PC-9 (cell line): ENCODE measurements at regions of chr21 and their contacts with region 1.

Region 1: DNA sequence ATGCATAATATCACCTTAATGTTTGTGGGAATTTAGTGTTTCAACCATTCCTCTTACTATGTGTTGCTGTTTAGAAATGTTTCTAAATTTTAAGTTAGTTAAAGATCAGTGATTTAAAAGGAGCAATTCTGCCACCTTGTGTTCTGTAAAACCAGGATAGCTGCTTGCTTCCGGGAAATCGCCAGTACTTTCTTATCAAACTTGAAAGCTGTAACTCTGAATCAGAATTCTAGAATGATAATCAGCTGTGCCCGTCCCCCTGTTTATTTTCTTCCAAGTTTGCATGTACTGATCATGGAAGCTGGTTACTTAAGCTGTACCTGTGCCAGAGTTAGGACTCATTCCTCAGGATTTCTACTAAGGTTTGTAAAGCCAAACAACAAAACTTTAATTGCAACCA is 656.4 kb downstream of the LTN1 start:
- DNase-seq: peak in 1 of 2 experiments; percentile 4
- H3K4me3 ChIP-seq: no peak overlapping the region
- H3K27ac ChIP-seq: no peak overlapping the region
- H3K4me1 ChIP-seq: no peaks in the 10 kb centered on the region
- H3K27me3 ChIP-seq: no peaks in the 10 kb centered on the region
- CTCF ChIP-seq: peak; percentile 43; the same call in 1 of the 2 replicates

Region 2: DNA sequence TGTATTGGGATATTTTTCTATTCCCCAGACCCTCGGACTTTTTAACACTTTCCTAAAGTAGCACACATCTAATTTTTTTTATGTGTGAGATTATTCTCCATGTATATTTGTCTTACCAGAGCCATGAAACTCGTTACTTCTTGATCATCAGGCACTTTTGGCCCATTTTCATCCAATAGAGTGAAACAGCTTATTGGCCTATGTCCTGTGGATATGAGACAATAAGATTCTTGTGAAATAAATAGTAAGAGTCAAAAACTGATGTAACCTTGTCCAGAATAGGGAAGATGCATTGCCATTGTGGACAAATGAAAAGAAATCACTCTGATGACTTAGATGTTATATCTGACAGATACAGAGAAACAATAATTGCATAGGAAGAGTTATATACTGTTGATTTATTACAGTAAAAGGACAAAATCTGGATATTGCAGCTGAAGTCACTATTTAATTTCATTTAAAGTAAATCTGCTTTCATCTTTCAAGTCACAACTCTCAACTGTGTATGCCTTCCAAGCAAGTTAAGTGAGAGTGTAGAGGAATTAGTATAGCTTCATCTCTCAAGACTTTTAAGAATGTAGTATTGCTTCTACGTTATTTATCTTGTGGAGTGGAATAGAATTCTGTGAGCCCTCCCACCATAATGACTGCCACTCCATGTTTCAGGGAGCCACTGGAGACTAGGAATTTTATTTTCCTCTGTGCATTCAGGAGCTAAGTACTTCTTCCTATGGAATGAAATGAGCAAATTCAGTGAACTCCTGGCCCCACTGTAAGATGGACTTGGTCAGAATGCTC is 1578.0 kb before region 1 on chr21:
- CTCF ChIA-PET with region 1: no interaction called
- POLR2A ChIA-PET with region 1: interaction called, 11 read pairs
- intact Hi-C with region 1: no loop called
- DNase-seq: no peak
- H3K4me3 ChIP-seq: no peak overlapping the region
- H3K27ac ChIP-seq: no peak overlapping the region
- H3K4me1 ChIP-seq: no peaks in the 10 kb centered on the region
- H3K27me3 ChIP-seq: no peaks in the 10 kb centered on the region
- CTCF ChIP-seq: no peak

Region 3: GRCh38 chr21:27700974-27701614 is 635.2 kb before region 1 on chr21:
- CTCF ChIA-PET with region 1: no interaction called
- POLR2A ChIA-PET with region 1: no interaction called
- intact Hi-C with region 1: loop called (anchors 1 kb)
- DNase-seq: peak; percentile 50 to 52
- H3K4me3 ChIP-seq: no peak overlapping the region
- H3K27ac ChIP-seq: no peak overlapping the region
- H3K4me1 ChIP-seq: no peaks in the 10 kb centered on the region
- H3K27me3 ChIP-seq: no peaks in the 10 kb centered on the region
- CTCF ChIP-seq: peak; percentile 80

Region 4: GRCh38 chr21:27759091-27759659 is 577.1 kb before region 1 on chr21:
- CTCF ChIA-PET with region 1: no interaction called
- POLR2A ChIA-PET with region 1: no interaction called
- intact Hi-C with region 1: loop called (anchors 1 kb)
- DNase-seq: peak in 1 of 2 experiments; percentile 27
- H3K4me3 ChIP-seq: no peak overlapping the region
- H3K27ac ChIP-seq: no peak overlapping the region
- H3K4me1 ChIP-seq: no peaks in the 10 kb centered on the region
- H3K27me3 ChIP-seq: no peaks in the 10 kb centered on the region
- CTCF ChIP-seq: peak; percentile 40; the same call in 1 of the 2 replicates

Region 5: GRCh38 chr21:28063241-28064216 is 272.8 kb before region 1 on chr21:
- CTCF ChIA-PET with region 1: no interaction called
- POLR2A ChIA-PET with region 1: no interaction called
- intact Hi-C with region 1: loop called (anchors 10 kb)
- DNase-seq: no peak
- H3K4me3 ChIP-seq: no peak overlapping the region
- H3K27ac ChIP-seq: no peak overlapping the region
- H3K4me1 ChIP-seq: no peaks in the 10 kb centered on the region
- H3K27me3 ChIP-seq: no peaks in the 10 kb centered on the region
- CTCF ChIP-seq: no peak

Region 6: DNA sequence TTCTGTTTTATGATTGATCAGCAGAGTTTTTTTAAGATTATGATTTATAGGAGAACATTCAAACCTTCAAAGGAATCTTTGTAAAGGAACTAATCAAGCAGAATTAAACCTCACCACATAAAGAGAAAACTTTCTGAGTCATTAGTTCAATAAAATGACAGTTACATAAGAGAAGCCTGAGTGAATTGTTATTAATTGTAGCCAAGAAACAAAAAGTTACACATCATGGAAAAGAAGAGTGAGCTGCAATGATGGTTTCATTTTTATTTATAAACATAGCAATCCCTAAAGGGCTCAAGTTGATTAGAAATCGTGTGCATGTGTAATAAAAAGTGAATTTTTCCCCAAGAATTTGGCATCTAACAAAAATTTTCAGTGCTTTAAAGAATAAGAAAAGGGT is 75.0 kb before region 1 on chr21:
- CTCF ChIA-PET with region 1: no interaction called
- POLR2A ChIA-PET with region 1: no interaction called
- intact Hi-C with region 1: no loop called
- DNase-seq: no peak
- H3K4me3 ChIP-seq: no peak overlapping the region
- H3K27ac ChIP-seq: no peak overlapping the region
- H3K4me1 ChIP-seq: no peaks in the 10 kb centered on the region
- H3K27me3 ChIP-seq: no peaks in the 10 kb centered on the region
- CTCF ChIP-seq: no peak

Region 7: GRCh38 chr21:28294051-28294450 is 42.3 kb before region 1 on chr21:
- CTCF ChIA-PET with region 1: no interaction called
- POLR2A ChIA-PET with region 1: no interaction called
- intact Hi-C with region 1: no loop called
- DNase-seq: no peak
- H3K4me3 ChIP-seq: no peak overlapping the region
- H3K27ac ChIP-seq: no peak overlapping the region
- H3K4me1 ChIP-seq: no peaks in the 10 kb centered on the region; the same call in 1 of the 2 replicates
- H3K27me3 ChIP-seq: no peaks in the 10 kb centered on the region
- CTCF ChIP-seq: no peak

Region 8: GRCh38 chr21:28509031-28509430 is 172.7 kb after region 1 on chr21:
- CTCF ChIA-PET with region 1: no interaction called
- POLR2A ChIA-PET with region 1: no interaction called
- intact Hi-C with region 1: no loop called
- DNase-seq: no peak
- H3K4me3 ChIP-seq: no peak overlapping the region
- H3K27ac ChIP-seq: no peak overlapping the region
- H3K4me1 ChIP-seq: no peaks in the 10 kb centered on the region
- H3K27me3 ChIP-seq: no peaks in the 10 kb centered on the region
- CTCF ChIP-seq: no peak

Region 9: DNA sequence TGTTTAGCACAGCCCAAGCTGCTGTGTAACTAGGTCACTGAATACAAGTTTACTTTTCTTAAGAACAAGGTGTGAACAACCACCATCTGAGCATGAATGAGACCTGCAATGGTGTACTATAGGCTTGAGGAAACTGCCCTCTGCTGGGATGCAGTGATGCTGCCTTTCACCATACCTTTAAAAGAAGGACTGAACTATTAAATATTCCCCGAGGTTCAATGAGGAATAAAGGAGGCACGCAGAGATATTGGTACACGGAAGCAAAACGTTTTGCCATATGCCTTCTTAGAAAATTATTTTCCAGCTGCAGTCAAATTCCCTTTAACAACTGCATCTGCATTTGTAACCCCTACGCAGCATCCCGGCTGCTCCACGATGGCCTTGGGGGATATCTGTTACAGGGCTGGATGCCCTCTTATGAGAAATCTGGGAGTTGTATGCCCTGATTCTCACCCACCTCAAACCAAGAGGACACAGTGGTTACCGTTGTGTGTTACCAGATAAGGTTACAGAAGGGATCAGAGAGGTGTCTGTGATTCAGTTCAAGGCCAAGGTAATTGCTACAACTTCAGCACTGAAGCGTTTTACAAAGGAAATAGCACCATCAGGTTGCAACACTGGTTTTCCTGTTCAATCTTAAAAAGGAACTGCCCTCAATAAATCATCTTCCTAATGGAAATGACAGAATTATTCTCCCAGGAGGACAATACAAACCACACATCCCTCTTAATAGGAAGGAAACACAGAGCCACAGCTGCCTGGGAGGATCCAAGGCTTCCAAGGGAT is 185.9 kb after region 1 on chr21:
- CTCF ChIA-PET with region 1: no interaction called
- POLR2A ChIA-PET with region 1: no interaction called
- intact Hi-C with region 1: loop called (anchors 5 kb)
- DNase-seq: peak in 1 of 2 experiments; percentile 11
- H3K4me3 ChIP-seq: no peak overlapping the region
- H3K27ac ChIP-seq: no peak overlapping the region
- H3K4me1 ChIP-seq: no peaks in the 10 kb centered on the region
- H3K27me3 ChIP-seq: no peaks in the 10 kb centered on the region
- CTCF ChIP-seq: no peak; the same call in 1 of the 2 replicates